ENCODE measurements at regions of chr5 and their contacts with region 1.

Region 1: DNA sequence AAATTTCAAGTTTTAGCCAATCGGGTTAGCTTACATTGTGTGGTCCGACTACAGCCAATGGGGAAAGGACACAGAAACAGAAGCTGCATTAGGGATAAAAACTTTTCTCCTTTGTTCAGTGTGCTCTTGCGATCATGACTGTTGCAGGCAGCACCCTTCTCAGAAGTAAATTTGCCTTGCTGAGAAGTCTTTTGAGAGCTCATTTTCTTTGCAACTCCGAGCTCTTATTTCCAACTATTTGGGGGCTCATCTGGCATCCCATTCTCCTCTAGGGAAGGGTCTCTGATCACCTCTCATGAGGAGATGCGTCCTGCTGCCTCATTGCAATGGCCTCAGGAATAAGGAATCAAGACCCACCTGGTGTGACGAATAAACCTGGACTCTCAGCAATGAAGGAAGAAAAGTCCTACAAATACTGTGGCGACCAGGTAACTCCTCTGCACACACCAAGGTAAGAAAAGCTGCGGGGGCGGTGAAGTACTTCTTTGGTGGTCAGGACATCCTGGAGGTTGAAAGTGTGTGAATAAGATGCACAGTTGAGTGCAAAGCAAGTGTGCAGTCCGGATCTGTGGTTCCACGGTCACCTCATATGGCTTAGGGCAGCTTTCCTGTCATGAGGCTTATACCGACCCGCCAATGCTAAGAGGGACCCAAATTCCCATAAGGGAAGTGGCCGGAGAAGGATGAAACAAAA is 20.4 kb downstream of the CNOT8 start:
- DNase-seq: no peak
- CTCF ChIP-seq: no peak

Region 2: GRCh38 chr5:154868702-154869101 is 10.1 kb before region 1 on chr5:
- CTCF ChIA-PET with region 1: interaction called, 27 read pairs
- POLR2A ChIA-PET with region 1: no interaction called
- DNase-seq: no peak
- CTCF ChIP-seq: no peak